AG04450 (cell line): ENCODE measurements at regions of chr1 and their contacts with region 1.

Region 1: DNA sequence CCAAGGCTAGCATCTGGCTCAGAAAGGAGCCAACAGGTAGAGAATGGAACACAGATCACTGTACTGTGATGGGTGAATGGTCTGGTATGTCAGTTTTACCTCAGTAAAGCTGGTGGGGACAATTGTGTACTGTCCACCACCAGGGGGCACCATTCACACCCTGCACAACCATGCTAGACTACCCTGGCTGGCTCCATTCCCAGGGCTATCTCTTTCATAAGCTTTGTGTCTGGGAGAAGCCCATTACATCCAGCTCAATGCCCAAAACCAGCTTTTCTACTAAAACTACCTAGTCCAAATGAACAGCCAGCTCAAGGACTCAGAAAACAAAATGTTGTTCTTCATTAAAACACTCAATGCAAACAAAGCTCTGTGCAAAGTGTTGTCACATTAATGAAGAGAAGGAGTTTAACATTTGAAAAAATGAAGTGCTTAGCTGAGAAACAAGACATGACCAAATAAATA is 62.0 kb upstream of the RASAL2 start:
- DNase-seq: peak; percentile 87
- H3K4me3 ChIP-seq: no peak overlapping the region
- H3K27ac ChIP-seq: no peak overlapping the region
- H3K27me3 ChIP-seq: no peaks in the 10 kb centered on the region
- CTCF ChIP-seq: peak; percentile 88

Region 2: DNA sequence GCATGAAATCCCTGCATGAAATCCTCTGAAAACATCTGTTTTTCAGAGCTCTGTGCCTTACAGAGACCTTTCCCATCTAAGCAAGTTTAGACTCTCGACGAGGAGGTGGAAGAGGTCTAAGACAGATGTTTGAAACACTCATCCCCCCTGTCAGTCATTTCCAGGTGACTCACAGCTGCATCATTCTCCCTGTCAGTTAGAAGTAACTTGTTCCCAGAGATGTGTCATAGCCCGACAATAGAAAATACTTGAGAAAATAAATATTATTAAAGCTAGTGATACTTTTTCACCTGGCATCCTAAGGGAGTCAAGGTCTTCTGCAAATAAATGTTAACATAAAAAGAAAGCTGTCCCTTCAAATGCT is 20.4 kb before region 1 on chr1:
- CTCF ChIA-PET with region 1: interaction called, 19 read pairs
- POLR2A ChIA-PET with region 1: no interaction called
- DNase-seq: no peak
- H3K4me3 ChIP-seq: no peak overlapping the region
- H3K27ac ChIP-seq: no peak overlapping the region
- H3K27me3 ChIP-seq: no peaks in the 10 kb centered on the region
- CTCF ChIP-seq: no peak

Region 3: GRCh38 chr1:178052650-178053461 is 21.0 kb after region 1 on chr1:
- CTCF ChIA-PET with region 1: interaction called, 13 read pairs
- POLR2A ChIA-PET with region 1: no interaction called
- DNase-seq: no peak
- H3K4me3 ChIP-seq: no peak overlapping the region
- H3K27ac ChIP-seq: no peak overlapping the region
- H3K27me3 ChIP-seq: no peaks in the 10 kb centered on the region
- CTCF ChIP-seq: no peak

Region 4: GRCh38 chr1:178122283-178122682 is 90.4 kb after region 1 on chr1:
- CTCF ChIA-PET with region 1: interaction called, 12 read pairs
- POLR2A ChIA-PET with region 1: no interaction called
- DNase-seq: no peak
- H3K4me3 ChIP-seq: no peak overlapping the region; the same call in 1 of the 2 replicates
- H3K27ac ChIP-seq: no peak overlapping the region
- H3K27me3 ChIP-seq: no peaks in the 10 kb centered on the region
- CTCF ChIP-seq: no peak

Region 5: GRCh38 chr1:178189814-178190213 is 157.9 kb after region 1 on chr1:
- CTCF ChIA-PET with region 1: interaction called, 11 read pairs
- POLR2A ChIA-PET with region 1: no interaction called
- DNase-seq: no peak
- H3K4me3 ChIP-seq: no peak overlapping the region
- H3K27ac ChIP-seq: no peak overlapping the region
- H3K27me3 ChIP-seq: no peaks in the 10 kb centered on the region
- CTCF ChIP-seq: peak; percentile 42

Region 6: DNA sequence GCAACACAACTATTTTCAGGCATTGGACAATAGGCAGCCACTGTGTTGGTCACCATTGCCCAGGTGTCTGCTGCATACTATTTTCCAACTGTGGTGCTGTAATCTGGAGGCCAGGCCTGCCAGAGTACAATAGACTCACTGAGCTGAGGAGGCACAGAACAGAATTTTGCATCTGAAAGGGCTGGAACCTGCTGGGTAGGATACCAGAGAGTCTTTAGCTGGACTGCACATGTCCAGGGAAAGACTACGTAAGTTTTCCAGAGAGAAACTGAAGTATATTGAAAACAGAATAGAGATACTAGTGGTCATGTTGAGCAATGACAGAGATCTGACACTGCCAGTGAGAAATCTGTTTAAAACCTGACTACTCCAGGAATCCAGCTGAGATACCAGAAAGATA is 262.8 kb after region 1 on chr1:
- CTCF ChIA-PET with region 1: interaction called, 83 read pairs
- POLR2A ChIA-PET with region 1: no interaction called
- DNase-seq: no peak
- H3K4me3 ChIP-seq: no peak overlapping the region
- H3K27ac ChIP-seq: no peak overlapping the region
- H3K27me3 ChIP-seq: no peaks in the 10 kb centered on the region
- CTCF ChIP-seq: no peak